ENCODE measurements at regions of chr16 and their contacts with region 1.

Region 1: GRCh38 chr16:15427648-15428239 is 6.6 kb upstream of the BMERB1 start:
- DNase-seq: peak in 34 of 35 experiments; percentile 2 to 69 (median 46)
- ATAC-seq: peak in 3 of 4 experiments; percentile 55 to 62 (median 58)
- H3K4me3 ChIP-seq: no peak overlapping the region
- H3K4me3 Mint-ChIP-seq: no peak overlapping the region
- H3K27ac ChIP-seq: no peak overlapping the region
- H3K27ac Mint-ChIP-seq: peak overlapping the region in 1 of 2 donors; percentile 43
- H3K4me1 ChIP-seq: no peaks in the 10 kb centered on the region
- H3K4me1 Mint-ChIP-seq: peaks cover 0 to 3% (median 2%) of the 10 kb centered on the region in 3 donors
- H3K27me3 ChIP-seq: peaks cover 0 to 11% of the 10 kb centered on the region in 2 experiments
- H3K27me3 Mint-ChIP-seq: peaks cover 9 to 20% of the 10 kb centered on the region in 2 donors

Region 2: DNA sequence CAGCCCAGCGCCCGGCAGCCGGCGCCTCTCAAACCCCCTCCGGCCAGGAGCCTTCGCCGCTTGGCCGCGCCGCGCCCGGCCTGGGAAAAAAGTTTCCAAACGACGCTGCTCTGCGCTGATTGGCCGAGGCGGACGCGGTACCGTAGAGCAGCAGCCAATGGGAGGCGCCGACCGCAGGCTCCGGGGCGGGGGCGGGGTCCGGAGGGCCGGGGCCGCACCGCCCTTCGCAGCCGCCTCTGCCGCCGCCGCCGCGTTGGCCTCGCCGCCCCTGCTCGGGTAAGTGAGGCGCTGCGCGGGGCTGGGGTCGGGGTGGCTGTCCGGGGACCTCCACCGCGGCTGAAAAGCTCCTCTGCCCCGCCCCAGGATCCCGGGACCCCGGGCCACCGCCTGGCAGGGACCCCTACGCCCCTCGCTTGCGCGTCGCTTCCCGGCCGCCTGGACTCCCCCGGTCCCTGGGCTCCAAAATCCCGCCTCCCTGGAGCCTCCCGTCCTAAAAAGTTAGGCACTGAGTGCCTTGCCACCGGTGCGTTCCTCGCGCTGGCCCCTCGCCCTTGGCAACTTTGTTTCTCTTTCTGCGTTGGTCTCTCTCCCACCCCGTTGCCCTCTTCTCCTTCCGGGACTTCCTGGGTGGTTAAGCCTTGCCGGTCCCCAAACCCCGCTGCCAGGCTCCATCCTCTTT is 222.4 kb after region 1 on chr16 and contains the start of gene NDE1:
- CTCF ChIA-PET with region 1: interaction called in 1 of 2 experiments, 10 read pairs
- POLR2A ChIA-PET with region 1: no interaction called
- DNase-seq: peak; percentile 62 to 93 (median 82)
- ATAC-seq: peak; percentile 98 to 99 (median 99)
- H3K4me3 ChIP-seq: peak within 1 kb of the TSS; percentile 90 to 98
- H3K4me3 Mint-ChIP-seq: peak within 1 kb of the TSS; percentile 98 to 99 (median 99)
- H3K27ac ChIP-seq: peak within 1 kb of the TSS; percentile 81
- H3K27ac Mint-ChIP-seq: peak within 1 kb of the TSS; percentile 99
- H3K4me1 ChIP-seq: peaks cover 12 to 43% of the 10 kb centered on the region in 2 experiments
- H3K4me1 Mint-ChIP-seq: peaks cover 32 to 40% (median 37%) of the 10 kb centered on the region in 3 donors
- H3K27me3 ChIP-seq: no peaks in the 10 kb centered on the region
- H3K27me3 Mint-ChIP-seq: no peaks in the 10 kb centered on the region
- total RNA-seq, gene NDE1: 90.8 to 110 (median 103) TPM